ENCODE measurements at regions of chr13 and their contacts with region 1.

Region 1: GRCh38 chr13:32472194-32472621 is 44.3 kb upstream of the N4BP2L1 start:
- DNase-seq: no peak
- H3K4me3 ChIP-seq: no peak overlapping the region
- H3K27ac ChIP-seq: no peak overlapping the region
- H3K4me1 ChIP-seq: no peaks in the 10 kb centered on the region
- H3K27me3 ChIP-seq: no peaks in the 10 kb centered on the region
- CTCF ChIP-seq: no peak

Region 2: GRCh38 chr13:31649766-31650165 is 822.4 kb before region 1 on chr13:
- CTCF ChIA-PET with region 1: no interaction called
- POLR2A ChIA-PET with region 1: no interaction called
- intact Hi-C with region 1: no loop called
- DNase-seq: no peak
- H3K4me3 ChIP-seq: no peak overlapping the region
- H3K27ac ChIP-seq: no peak overlapping the region
- H3K4me1 ChIP-seq: no peaks in the 10 kb centered on the region
- H3K27me3 ChIP-seq: no peaks in the 10 kb centered on the region
- CTCF ChIP-seq: no peak

Region 3: DNA sequence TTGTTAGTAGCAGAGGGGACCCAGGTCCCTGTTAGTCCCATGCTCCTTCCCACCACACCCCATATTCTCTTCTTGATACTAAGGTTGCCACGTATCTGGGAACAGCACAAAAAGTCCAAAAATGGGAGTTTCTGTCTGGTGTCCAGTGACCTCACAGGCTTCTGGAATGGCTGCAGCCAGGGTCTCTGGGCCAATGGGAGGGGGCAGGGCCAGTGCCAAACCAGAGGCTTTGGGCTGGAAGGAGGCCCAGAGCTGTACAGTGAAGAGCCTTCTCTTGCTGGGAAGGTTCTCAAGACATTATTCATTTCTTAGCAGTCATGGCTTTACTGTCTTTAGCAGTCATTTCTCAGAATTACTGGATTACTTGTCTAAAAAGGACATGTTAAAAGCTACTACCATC is 321.4 kb before region 1 on chr13:
- CTCF ChIA-PET with region 1: no interaction called
- POLR2A ChIA-PET with region 1: no interaction called
- intact Hi-C with region 1: no loop called
- DNase-seq: no peak
- H3K4me3 ChIP-seq: no peak overlapping the region
- H3K27ac ChIP-seq: no peak overlapping the region
- H3K4me1 ChIP-seq: no peaks in the 10 kb centered on the region
- H3K27me3 ChIP-seq: no peaks in the 10 kb centered on the region
- CTCF ChIP-seq: no peak

Region 4: DNA sequence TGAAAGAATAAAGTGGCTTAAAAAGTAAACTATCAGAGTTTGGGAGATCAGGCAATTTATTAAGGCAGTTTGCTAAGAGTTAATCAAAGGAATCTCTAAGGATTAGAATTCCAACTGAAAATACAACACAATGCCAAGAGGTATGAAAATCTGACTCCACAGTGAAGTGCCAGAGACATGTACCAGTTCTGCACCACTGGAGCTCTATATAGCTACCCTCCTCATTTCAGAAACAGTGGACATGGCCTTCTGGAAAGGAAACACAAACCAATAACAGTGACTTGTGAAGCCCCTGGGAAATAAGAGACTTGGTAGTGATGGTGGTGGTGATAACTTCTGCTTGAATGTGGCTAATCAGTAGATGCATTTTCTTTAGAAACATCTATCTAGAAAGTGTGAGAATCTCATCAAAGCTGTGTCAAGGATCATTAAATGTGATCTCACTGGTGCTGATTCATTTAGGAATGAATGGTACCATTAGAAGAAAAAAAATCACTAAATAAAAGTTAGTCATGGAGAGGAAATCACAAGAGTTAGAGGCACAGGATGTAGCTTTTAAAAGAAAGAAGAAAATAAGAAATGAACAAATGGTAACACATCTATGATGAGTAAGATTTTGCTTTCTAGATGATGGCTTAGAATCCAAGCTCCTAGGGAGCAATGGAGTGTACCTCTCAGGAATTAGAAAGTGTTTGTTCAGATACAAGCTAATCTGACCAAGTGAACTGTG is 24.1 kb before region 1 on chr13:
- CTCF ChIA-PET with region 1: no interaction called
- POLR2A ChIA-PET with region 1: interaction called, 12 read pairs
- intact Hi-C with region 1: no loop called
- DNase-seq: no peak
- H3K4me3 ChIP-seq: no peak overlapping the region
- H3K27ac ChIP-seq: no peak overlapping the region
- H3K4me1 ChIP-seq: no peaks in the 10 kb centered on the region
- H3K27me3 ChIP-seq: no peaks in the 10 kb centered on the region
- CTCF ChIP-seq: no peak

Region 5: GRCh38 chr13:32530841-32531253 is 58.6 kb after region 1 on chr13:
- CTCF ChIA-PET with region 1: no interaction called
- POLR2A ChIA-PET with region 1: interaction called, 12 read pairs
- intact Hi-C with region 1: no loop called
- DNase-seq: peak; percentile 8
- H3K4me3 ChIP-seq: no peak overlapping the region
- H3K27ac ChIP-seq: no peak overlapping the region
- H3K4me1 ChIP-seq: peaks cover 19% of the 10 kb centered on the region
- H3K27me3 ChIP-seq: no peaks in the 10 kb centered on the region
- CTCF ChIP-seq: no peak